Breast epithelium (tissue), 4 donors: ENCODE measurements at regions of chr15 and their contacts with region 1.

Region 1: DNA sequence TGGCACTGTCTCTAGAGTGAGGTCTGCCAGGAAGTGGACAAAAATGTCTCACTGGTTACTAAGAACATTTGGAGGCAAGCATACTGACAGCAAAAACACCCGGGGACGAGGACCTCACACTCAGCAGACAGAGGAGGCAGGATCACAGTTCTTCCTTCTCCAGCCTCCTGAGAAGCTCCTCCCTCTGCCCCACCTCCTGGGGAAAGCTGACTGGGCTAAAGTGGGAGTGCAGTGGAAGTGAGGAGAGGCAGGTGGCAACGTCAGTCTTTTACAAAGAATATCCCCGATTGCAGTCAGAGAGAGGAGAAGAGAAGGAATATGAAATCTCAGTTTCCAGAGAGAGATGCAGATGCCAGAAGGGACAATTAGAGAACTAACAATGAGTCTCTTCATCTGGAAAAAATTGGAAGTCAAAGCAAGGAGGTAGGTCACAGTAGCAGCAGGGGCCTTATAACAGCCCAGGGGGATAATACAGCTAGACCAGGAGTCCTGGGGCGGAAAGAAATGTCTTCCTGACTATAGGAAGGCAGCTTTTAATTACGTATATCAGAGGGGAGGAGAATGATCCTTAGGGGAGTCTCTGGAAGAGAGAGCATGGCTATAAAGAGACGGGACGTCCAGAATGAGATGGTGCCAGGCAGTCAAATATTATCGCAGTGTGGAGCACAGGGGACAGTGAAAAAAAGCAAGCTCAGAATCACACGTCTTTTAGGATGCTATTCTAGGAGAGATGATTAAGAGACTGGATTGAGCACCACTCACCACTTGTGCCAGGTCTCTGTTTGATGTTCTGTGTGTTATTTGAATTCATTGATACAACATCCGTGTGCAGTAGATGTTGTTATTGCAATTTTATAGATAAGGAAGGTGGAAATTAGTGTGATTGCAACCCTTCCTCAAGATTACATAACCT is 47.2 kb downstream of the LEO1 start:
- DNase-seq: no peak
- H3K4me3 ChIP-seq: no peak overlapping the region
- H3K27ac ChIP-seq: no peak overlapping the region
- H3K4me1 ChIP-seq: no peaks in the 10 kb centered on the region
- H3K27me3 ChIP-seq: no peaks in the 10 kb centered on the region
- CTCF ChIP-seq: no peak
- POLR2A ChIP-seq: no peak

Region 2: DNA sequence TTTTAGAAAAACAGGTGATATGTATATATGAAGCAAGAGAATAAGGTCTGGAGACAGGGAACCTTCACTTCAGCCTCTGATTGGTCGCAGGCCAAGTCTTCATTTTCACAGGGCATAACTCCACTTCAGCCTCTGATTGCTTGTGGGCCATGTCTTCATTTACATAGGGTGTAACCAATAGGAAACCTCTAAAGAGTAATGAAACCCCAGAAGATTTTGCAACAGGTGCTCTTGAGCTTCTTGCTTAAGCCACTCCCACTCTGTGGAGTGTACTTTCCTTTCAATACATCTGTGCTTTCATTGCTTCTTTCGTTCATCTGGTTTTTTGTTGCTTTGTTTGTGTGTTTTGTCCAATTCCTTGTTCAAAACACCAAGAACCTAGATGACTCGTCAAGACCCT is 265.7 kb before region 1 on chr15:
- intact Hi-C with region 1: no loop called
- DNase-seq: no peak
- H3K4me3 ChIP-seq: no peak overlapping the region
- H3K27ac ChIP-seq: no peak overlapping the region
- H3K4me1 ChIP-seq: no peaks in the 10 kb centered on the region
- H3K27me3 ChIP-seq: no peaks in the 10 kb centered on the region
- CTCF ChIP-seq: no peak
- POLR2A ChIP-seq: no peak

Region 3: DNA sequence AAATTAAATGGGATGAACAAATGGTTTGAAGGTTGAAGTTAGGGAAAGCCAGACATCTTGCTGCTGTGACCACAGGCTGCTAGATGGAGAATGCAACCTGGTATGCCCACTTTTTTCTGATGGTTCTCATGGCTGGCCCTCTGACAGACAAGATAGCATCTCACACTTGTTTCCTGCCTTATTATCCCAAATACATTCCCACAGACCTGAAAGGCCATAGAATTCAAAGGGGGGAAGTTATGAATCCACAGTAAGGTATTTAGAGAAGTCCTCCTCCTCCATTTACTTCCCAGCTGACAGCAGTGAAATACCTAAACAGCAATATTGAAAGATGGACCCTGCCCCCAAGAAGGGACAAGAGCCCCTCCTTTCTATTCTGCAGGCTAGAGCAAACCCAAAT is 14.8 kb after region 1 on chr15:
- intact Hi-C with region 1: loop called (anchors 2 kb)
- DNase-seq: no peak
- H3K4me3 ChIP-seq: no peak overlapping the region
- H3K27ac ChIP-seq: no peak overlapping the region
- H3K4me1 ChIP-seq: no peaks in the 10 kb centered on the region
- H3K27me3 ChIP-seq: no peaks in the 10 kb centered on the region
- CTCF ChIP-seq: no peak
- POLR2A ChIP-seq: no peak